Testis (tissue), 5 donors: ENCODE measurements at regions of chr2 and their contacts with region 1.

Region 1: GRCh38 chr2:178796079-178796677 is 11.0 kb downstream of the TTN start:
- DNase-seq: no peak
- H3K4me3 ChIP-seq: no peak overlapping the region
- H3K27ac ChIP-seq: no peak overlapping the region
- H3K4me1 ChIP-seq: no peaks in the 10 kb centered on the region
- H3K27me3 ChIP-seq: no peaks in the 10 kb centered on the region
- CTCF ChIP-seq: peak; percentile 28 to 55 (median 29)
- POLR2A ChIP-seq: no peak

Region 2: DNA sequence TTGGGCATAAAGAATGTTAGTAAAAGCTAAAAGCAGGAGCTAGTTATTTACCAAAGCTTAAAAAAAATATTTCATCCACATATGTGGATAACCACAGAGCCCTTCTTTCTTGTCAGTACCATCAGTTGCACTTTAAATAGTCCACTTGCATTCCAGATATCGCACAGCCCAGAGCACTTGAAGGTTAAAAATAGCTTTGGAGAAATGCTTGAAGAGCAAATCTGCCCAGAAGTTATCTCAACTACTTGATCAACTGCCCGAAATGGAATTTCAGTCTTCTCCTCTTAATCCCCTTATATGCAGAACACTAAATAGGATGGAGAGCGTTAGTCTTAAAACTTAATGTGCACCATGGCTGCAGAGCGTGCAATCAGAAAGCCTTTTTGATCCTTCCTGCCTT is 167.6 kb before region 1 on chr2:
- intact Hi-C with region 1: no loop called
- DNase-seq: no peak
- H3K4me3 ChIP-seq: no peak overlapping the region
- H3K27ac ChIP-seq: no peak overlapping the region
- H3K4me1 ChIP-seq: no peaks in the 10 kb centered on the region
- H3K27me3 ChIP-seq: no peaks in the 10 kb centered on the region
- CTCF ChIP-seq: no peak
- POLR2A ChIP-seq: no peak

Region 3: DNA sequence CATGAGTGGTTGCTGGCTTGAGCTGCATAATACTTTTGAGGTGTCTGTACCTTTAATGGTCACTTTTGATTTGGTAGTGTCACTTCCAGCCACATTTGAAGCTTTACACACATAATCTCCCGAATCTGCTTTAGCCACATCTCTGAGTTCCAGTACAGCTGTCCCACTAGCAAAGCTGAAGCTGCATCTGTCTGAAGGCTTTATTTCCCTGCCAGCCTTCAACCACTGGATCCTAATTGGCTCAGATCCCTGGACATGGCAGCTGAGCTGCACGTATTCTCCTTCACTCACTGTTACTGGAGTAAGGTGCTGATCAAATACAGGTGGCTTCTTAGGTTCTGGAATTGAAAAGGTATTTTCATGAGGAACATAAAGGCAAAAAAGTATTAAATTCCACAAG is 88.7 kb before region 1 on chr2:
- intact Hi-C with region 1: no loop called
- DNase-seq: no peak
- H3K4me3 ChIP-seq: no peak overlapping the region
- H3K27ac ChIP-seq: no peak overlapping the region
- H3K4me1 ChIP-seq: no peaks in the 10 kb centered on the region
- H3K27me3 ChIP-seq: no peaks in the 10 kb centered on the region
- CTCF ChIP-seq: no peak
- POLR2A ChIP-seq: no peak

Region 4: GRCh38 chr2:178917555-178917954 is 121.4 kb after region 1 on chr2:
- intact Hi-C with region 1: loop called (anchors 5 kb)
- DNase-seq: no peak
- H3K4me3 ChIP-seq: no peak overlapping the region
- H3K27ac ChIP-seq: no peak overlapping the region
- H3K4me1 ChIP-seq: no peaks in the 10 kb centered on the region
- H3K27me3 ChIP-seq: no peaks in the 10 kb centered on the region
- CTCF ChIP-seq: no peak
- POLR2A ChIP-seq: no peak